ENCODE measurements at regions of chr7 and their contacts with region 1.

Region 1: GRCh38 chr7:134420424-134421125 is 38.3 kb downstream of the AKR1B1 start:
- DNase-seq: peak; percentile 7
- H3K4me3 ChIP-seq: no peak overlapping the region
- H3K27ac ChIP-seq: no peak overlapping the region
- H3K27me3 ChIP-seq: peaks cover 14% of the 10 kb centered on the region
- CTCF ChIP-seq: peak; percentile 65

Region 2: GRCh38 chr7:134502463-134503371 is 82.1 kb after region 1 on chr7:
- CTCF ChIA-PET with region 1: no interaction called
- POLR2A ChIA-PET with region 1: interaction called, 12 read pairs
- DNase-seq: no peak
- H3K4me3 ChIP-seq: no peak overlapping the region
- H3K27ac ChIP-seq: no peak overlapping the region
- H3K27me3 ChIP-seq: no peaks in the 10 kb centered on the region
- CTCF ChIP-seq: no peak